Endothelial cell of umbilical vein (primary cell): ENCODE measurements at regions of chr10 and their contacts with region 1.

Region 1: DNA sequence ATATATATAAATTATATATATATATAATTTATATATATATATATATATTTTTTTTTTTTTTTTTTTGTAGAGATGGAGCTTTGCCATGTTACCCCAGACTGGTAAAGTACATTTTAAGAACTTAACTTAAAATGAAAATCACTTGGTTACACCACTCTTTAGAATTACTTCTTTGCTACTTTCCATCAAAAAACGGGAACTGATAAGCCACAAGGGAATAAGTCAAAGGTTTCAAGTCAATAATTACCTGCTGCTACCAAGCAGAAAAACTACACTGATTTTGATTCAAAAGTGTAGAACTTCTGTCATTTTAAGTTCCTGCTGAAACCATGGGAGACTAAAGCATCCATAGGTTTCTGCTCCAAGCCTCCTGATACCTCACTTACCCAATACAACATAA is 12.2 kb downstream of the PPA1 start:
- DNase-seq: no peak
- H3K4me3 ChIP-seq: no peak overlapping the region
- H3K27ac ChIP-seq: no peak overlapping the region
- H3K4me1 ChIP-seq: peaks cover 6% of the 10 kb centered on the region
- H3K27me3 ChIP-seq: no peaks in the 10 kb centered on the region
- CTCF ChIP-seq: no peak
- POLR2A ChIP-seq: no peak

Region 2: GRCh38 chr10:70206762-70207161 is 14.3 kb before region 1 on chr10:
- CTCF ChIA-PET with region 1: interaction called, 18 read pairs
- POLR2A ChIA-PET with region 1: no interaction called
- dilution Hi-C with region 1: no loop called
- intact Hi-C with region 1: no loop called
- DNase-seq: no peak
- H3K4me3 ChIP-seq: no peak overlapping the region
- H3K27ac ChIP-seq: no peak overlapping the region
- H3K4me1 ChIP-seq: no peaks in the 10 kb centered on the region
- H3K27me3 ChIP-seq: no peaks in the 10 kb centered on the region
- CTCF ChIP-seq: no peak
- POLR2A ChIP-seq: no peak

Region 3: DNA sequence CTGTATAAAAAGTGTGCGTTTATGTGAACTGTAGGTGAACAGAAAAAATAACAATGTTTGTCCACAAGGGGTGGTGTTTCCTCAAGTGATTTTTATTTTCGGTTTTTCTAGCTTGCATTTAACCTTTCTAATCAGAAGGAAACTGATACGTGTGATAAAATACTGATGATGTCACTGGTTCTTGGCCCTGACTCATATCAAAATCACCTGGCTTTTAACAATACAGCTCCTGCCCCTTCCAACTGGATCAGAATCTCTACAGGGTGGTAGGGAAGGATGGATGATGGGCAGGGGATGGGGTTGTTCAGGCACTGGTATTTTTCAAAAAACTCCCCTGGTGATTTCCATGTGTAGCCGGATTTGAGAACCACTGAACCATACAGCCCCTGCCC is 51.9 kb after region 1 on chr10:
- CTCF ChIA-PET with region 1: interaction called, 20 read pairs
- POLR2A ChIA-PET with region 1: no interaction called
- dilution Hi-C with region 1: no loop called
- intact Hi-C with region 1: no loop called
- DNase-seq: peak; percentile 21
- H3K4me3 ChIP-seq: no peak overlapping the region
- H3K27ac ChIP-seq: no peak overlapping the region
- H3K4me1 ChIP-seq: no peaks in the 10 kb centered on the region
- H3K27me3 ChIP-seq: peaks cover 10 to 20% of the 10 kb centered on the region in 2 experiments
- CTCF ChIP-seq: peak; percentile 31 to 32
- POLR2A ChIP-seq: no peak

Region 4: GRCh38 chr10:70363971-70364771 is 143.1 kb after region 1 on chr10:
- CTCF ChIA-PET with region 1: interaction called, 498 read pairs
- POLR2A ChIA-PET with region 1: interaction called, 10 read pairs
- dilution Hi-C with region 1: no loop called
- intact Hi-C with region 1: loop called (anchors 1 kb)
- DNase-seq: peak; percentile 79
- H3K4me3 ChIP-seq: no peak overlapping the region
- H3K27ac ChIP-seq: no peak overlapping the region
- H3K4me1 ChIP-seq: no peaks in the 10 kb centered on the region
- H3K27me3 ChIP-seq: no peaks in the 10 kb centered on the region
- CTCF ChIP-seq: peak; percentile 82 to 95
- POLR2A ChIP-seq: no peak

Region 5: DNA sequence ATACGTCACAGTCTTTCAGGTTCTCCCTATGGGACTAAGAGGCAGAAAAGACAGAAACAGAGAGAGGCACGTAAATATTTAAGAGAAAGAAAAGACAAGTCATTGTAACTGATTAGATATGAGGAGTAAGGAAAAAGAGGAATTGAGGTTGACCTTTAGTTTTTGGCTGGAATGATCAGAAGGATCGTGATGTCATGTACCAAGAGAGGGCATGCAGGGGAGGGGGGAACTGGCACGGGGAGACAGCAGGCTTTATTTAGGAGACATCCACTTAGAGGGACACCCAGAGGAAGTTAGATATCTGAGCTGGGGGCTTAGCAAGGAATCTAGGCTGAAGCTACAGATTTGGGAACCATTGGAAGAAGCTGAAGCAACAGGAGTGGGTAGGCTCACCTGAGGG is 170.6 kb after region 1 on chr10:
- CTCF ChIA-PET with region 1: interaction called, 89 read pairs
- POLR2A ChIA-PET with region 1: no interaction called
- dilution Hi-C with region 1: no loop called
- intact Hi-C with region 1: no loop called
- DNase-seq: no peak
- H3K4me3 ChIP-seq: no peak overlapping the region
- H3K27ac ChIP-seq: no peak overlapping the region
- H3K4me1 ChIP-seq: no peaks in the 10 kb centered on the region
- H3K27me3 ChIP-seq: peaks cover 13 to 19% of the 10 kb centered on the region in 2 experiments
- CTCF ChIP-seq: no peak
- POLR2A ChIP-seq: no peak

Region 6: GRCh38 chr10:70455213-70455630 is 234.2 kb after region 1 on chr10:
- CTCF ChIA-PET with region 1: interaction called, 38 read pairs
- POLR2A ChIA-PET with region 1: no interaction called
- dilution Hi-C with region 1: no loop called
- intact Hi-C with region 1: no loop called
- DNase-seq: no peak
- H3K4me3 ChIP-seq: no peak overlapping the region
- H3K27ac ChIP-seq: no peak overlapping the region
- H3K4me1 ChIP-seq: no peaks in the 10 kb centered on the region
- H3K27me3 ChIP-seq: peaks cover 10 to 17% of the 10 kb centered on the region in 2 experiments
- CTCF ChIP-seq: no peak
- POLR2A ChIP-seq: no peak